ENCODE measurements at regions of chr9 and their contacts with region 1.

Region 1: GRCh38 chr9:128688512-128689292 is at the start of gene SET:
- DNase-seq: peak; percentile 97
- ATAC-seq: peak; percentile 81
- H3K4me3 ChIP-seq: peak within 1 kb of the TSS; percentile 57 to 81 (median 70)
- H3K4me3 Mint-ChIP-seq: peak within 1 kb of the TSS; percentile 89
- H3K27ac ChIP-seq: peak within 1 kb of the TSS; percentile 89 to 91
- H3K27ac Mint-ChIP-seq: peak within 1 kb of the TSS; percentile 95
- H3K4me1 ChIP-seq: peaks cover 47 to 57% of the 10 kb centered on the region in 2 donors
- H3K4me1 Mint-ChIP-seq: peaks cover 60% of the 10 kb centered on the region
- H3K27me3 ChIP-seq: no peaks in the 10 kb centered on the region
- H3K27me3 Mint-ChIP-seq: no peaks in the 10 kb centered on the region
- CTCF ChIP-seq: no peak
- total RNA-seq, gene SET: 306 and 309 TPM in 2 replicates

Region 2: DNA sequence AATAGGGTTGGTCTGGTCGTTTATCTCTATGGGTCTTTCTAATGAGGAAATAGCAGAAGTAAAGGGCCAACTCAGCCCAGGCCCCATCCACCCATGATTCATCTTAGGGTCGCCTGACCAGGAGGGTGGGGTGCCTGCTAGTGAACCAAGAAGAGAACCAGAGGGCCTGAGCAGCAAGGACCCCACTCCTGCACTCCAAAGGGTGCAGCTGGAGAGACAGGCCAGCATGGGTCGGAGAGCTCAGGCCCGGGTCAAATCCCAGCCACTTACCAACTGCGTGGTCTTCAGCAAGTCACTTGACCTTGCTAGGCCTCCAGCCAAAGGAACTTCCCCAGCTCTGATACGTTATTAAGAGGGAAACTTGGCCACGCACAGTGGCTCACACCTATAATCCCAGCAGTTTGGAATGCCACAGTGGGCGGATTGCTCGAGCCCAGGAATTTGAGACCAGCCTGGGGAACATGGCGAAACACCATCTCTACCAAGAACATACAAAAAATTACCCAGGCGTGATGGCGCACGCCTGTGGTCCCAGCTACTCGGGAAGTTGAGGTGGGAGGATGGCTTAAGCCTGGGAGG is 524.3 kb before region 1 on chr9:
- CTCF ChIA-PET with region 1: no interaction called
- POLR2A ChIA-PET with region 1: no interaction called
- intact Hi-C with region 1: no loop called
- DNase-seq: no peak
- ATAC-seq: no peak
- H3K4me3 ChIP-seq: no peak overlapping the region
- H3K4me3 Mint-ChIP-seq: no peak overlapping the region
- H3K27ac ChIP-seq: no peak overlapping the region
- H3K27ac Mint-ChIP-seq: no peak overlapping the region
- H3K4me1 ChIP-seq: peaks cover 6 to 14% of the 10 kb centered on the region in 2 donors
- H3K4me1 Mint-ChIP-seq: peaks cover 10% of the 10 kb centered on the region
- H3K27me3 ChIP-seq: no peaks in the 10 kb centered on the region
- H3K27me3 Mint-ChIP-seq: no peaks in the 10 kb centered on the region
- CTCF ChIP-seq: no peak

Region 3: GRCh38 chr9:128643519-128644300 is 45.0 kb before region 1 on chr9:
- CTCF ChIA-PET with region 1: interaction called, 16 read pairs
- POLR2A ChIA-PET with region 1: interaction called, 3 read pairs
- intact Hi-C with region 1: loop called (anchors 5 kb)
- DNase-seq: peak; percentile 50
- ATAC-seq: peak; percentile 71
- H3K4me3 ChIP-seq: no peak overlapping the region
- H3K4me3 Mint-ChIP-seq: peak overlapping the region; percentile 69
- H3K27ac ChIP-seq: peak overlapping the region; percentile 29 to 56
- H3K27ac Mint-ChIP-seq: peak overlapping the region; percentile 92
- H3K4me1 ChIP-seq: peaks cover 6 to 15% of the 10 kb centered on the region in 2 donors
- H3K4me1 Mint-ChIP-seq: peaks cover 18% of the 10 kb centered on the region
- H3K27me3 ChIP-seq: no peaks in the 10 kb centered on the region
- H3K27me3 Mint-ChIP-seq: no peaks in the 10 kb centered on the region
- CTCF ChIP-seq: no peak

Region 4: DNA sequence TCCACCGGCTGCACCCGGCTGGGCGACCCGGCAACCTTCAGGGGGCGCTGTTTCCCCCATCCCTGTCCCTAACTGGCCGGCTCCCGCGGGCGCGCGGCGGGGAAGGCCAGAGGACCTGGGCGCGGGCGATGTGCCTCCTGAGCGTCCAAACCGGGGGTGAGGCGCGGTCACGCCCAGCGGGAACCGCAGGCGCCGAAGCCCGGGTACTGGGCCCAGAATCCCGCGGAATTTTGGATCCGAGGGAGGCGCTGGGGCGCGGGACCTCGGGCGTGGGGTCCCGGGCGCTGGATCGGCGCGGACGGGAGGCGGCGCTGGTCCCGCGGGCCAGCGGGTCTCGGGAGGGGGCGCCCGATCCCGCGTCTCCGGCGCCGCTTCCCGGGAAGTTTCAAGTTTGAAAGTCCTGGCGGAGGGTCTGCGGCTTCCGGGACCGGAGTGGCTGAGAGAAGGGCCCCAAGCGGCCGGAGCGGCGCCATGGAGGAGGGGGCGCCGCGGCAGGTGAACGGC is 13.8 kb after region 1 on chr9 and contains the start of gene PKN3:
- CTCF ChIA-PET with region 1: interaction called, 13 read pairs
- POLR2A ChIA-PET with region 1: interaction called, 6 read pairs
- intact Hi-C with region 1: loop called (anchors 1 kb)
- DNase-seq: peak; percentile 89
- ATAC-seq: peak; percentile 89
- H3K4me3 ChIP-seq: peak within 1 kb of the TSS; percentile 11 to 83 (median 67)
- H3K4me3 Mint-ChIP-seq: peak within 1 kb of the TSS; percentile 91
- H3K27ac ChIP-seq: no peak within 1 kb of the TSS
- H3K27ac Mint-ChIP-seq: peak within 1 kb of the TSS; percentile 76
- H3K4me1 ChIP-seq: peaks cover 9 to 17% of the 10 kb centered on the region in 2 donors
- H3K4me1 Mint-ChIP-seq: peaks cover 10% of the 10 kb centered on the region
- H3K27me3 ChIP-seq: no peaks in the 10 kb centered on the region
- H3K27me3 Mint-ChIP-seq: no peaks in the 10 kb centered on the region
- CTCF ChIP-seq: peak; percentile 96
- total RNA-seq, gene PKN3: 3.7 and 4.2 TPM in 2 replicates

Region 5: DNA sequence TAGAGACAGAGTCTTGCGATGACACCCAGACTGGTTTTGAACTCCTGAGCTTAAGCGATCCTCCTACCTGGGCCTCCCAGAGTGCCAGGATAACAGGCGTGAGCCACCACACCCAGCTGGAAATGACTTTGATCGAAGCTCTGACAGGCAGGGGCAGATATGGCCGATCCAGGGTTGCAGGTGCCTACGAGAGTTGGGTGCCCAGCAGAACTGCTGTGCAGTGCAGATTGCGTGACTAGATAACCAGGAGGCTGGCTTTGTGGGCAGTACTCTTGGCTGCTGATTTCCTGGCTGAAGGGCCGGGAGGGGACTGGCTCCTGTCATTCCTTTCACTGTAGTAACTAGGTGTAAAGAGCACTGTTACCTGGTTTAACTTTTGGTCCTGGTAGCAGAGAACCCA is 110.2 kb after region 1 on chr9:
- CTCF ChIA-PET with region 1: no interaction called
- POLR2A ChIA-PET with region 1: no interaction called
- intact Hi-C with region 1: no loop called
- DNase-seq: no peak
- ATAC-seq: no peak
- H3K4me3 ChIP-seq: no peak overlapping the region
- H3K4me3 Mint-ChIP-seq: no peak overlapping the region
- H3K27ac ChIP-seq: no peak overlapping the region
- H3K27ac Mint-ChIP-seq: no peak overlapping the region
- H3K4me1 ChIP-seq: no peaks in the 10 kb centered on the region
- H3K4me1 Mint-ChIP-seq: no peaks in the 10 kb centered on the region
- H3K27me3 ChIP-seq: no peaks in the 10 kb centered on the region
- H3K27me3 Mint-ChIP-seq: no peaks in the 10 kb centered on the region
- CTCF ChIP-seq: no peak

Region 6: GRCh38 chr9:128818099-128818838 is 129.6 kb after region 1 on chr9 and contains the start of gene ENDOG:
- CTCF ChIA-PET with region 1: interaction called, 6 read pairs
- POLR2A ChIA-PET with region 1: interaction called, 4 read pairs
- intact Hi-C with region 1: loop called (anchors 1 kb)
- DNase-seq: peak; percentile 97
- ATAC-seq: peak; percentile 95
- H3K4me3 ChIP-seq: peak within 1 kb of the TSS; percentile 68 to 76 (median 69)
- H3K4me3 Mint-ChIP-seq: peak within 1 kb of the TSS; percentile 95
- H3K27ac ChIP-seq: peak within 1 kb of the TSS in 1 of 2 donors; percentile 53
- H3K27ac Mint-ChIP-seq: peak within 1 kb of the TSS; percentile 94
- H3K4me1 ChIP-seq: peaks cover 5 to 16% of the 10 kb centered on the region in 2 donors
- H3K4me1 Mint-ChIP-seq: peaks cover 14% of the 10 kb centered on the region
- H3K27me3 ChIP-seq: no peaks in the 10 kb centered on the region
- H3K27me3 Mint-ChIP-seq: no peaks in the 10 kb centered on the region
- CTCF ChIP-seq: peak; percentile 95
- total RNA-seq, gene ENDOG: 17.1 and 19.3 TPM in 2 replicates

Region 7: GRCh38 chr9:128947422-128948301 is 259.0 kb after region 1 on chr9 and contains the starts of genes DOLK and NUP188:
- CTCF ChIA-PET with region 1: no interaction called
- POLR2A ChIA-PET with region 1: no interaction called
- intact Hi-C with region 1: loop called (anchors 2 kb)
- DNase-seq: peak; percentile 98
- ATAC-seq: peak; percentile 86
- H3K4me3 ChIP-seq: peak within 1 kb of the TSS; percentile 64 to 95 (median 84)
- H3K4me3 Mint-ChIP-seq: peak within 1 kb of the TSS; percentile 97
- H3K27ac ChIP-seq: peak within 1 kb of the TSS; percentile 91 to 96
- H3K27ac Mint-ChIP-seq: peak within 1 kb of the TSS; percentile 98
- H3K4me1 ChIP-seq: peaks cover 15 to 18% of the 10 kb centered on the region in 2 donors
- H3K4me1 Mint-ChIP-seq: peaks cover 27% of the 10 kb centered on the region
- H3K27me3 ChIP-seq: no peaks in the 10 kb centered on the region
- H3K27me3 Mint-ChIP-seq: no peaks in the 10 kb centered on the region
- CTCF ChIP-seq: no peak
- total RNA-seq, gene DOLK: 11.1 and 12.2 TPM in 2 replicates
- total RNA-seq, gene NUP188: 83.6 and 93.2 TPM in 2 replicates

Measured in B cell (primary cell).